BJ (cell line): ENCODE measurements at regions of chr12 and their contacts with region 1.

Region 1: GRCh38 chr12:19643635-19644034 is 204.3 kb downstream of the AEBP2 start:
- DNase-seq: no peak
- H3K4me3 ChIP-seq: no peak overlapping the region
- H3K27me3 ChIP-seq: no peaks in the 10 kb centered on the region
- CTCF ChIP-seq: peak; percentile 79

Region 2: GRCh38 chr12:19572920-19573558 is 70.6 kb before region 1 on chr12:
- CTCF ChIA-PET with region 1: interaction called, 30 read pairs
- POLR2A ChIA-PET with region 1: no interaction called
- DNase-seq: no peak
- H3K4me3 ChIP-seq: no peak overlapping the region
- H3K27me3 ChIP-seq: no peaks in the 10 kb centered on the region
- CTCF ChIP-seq: peak; percentile 63